ENCODE measurements at regions of chr12 and their contacts with region 1.

Region 1: GRCh38 chr12:11183011-11183410 is 3.7 kb downstream of the TAS2R42 start:
- ATAC-seq: peak in 5 of 8 experiments; percentile 57 to 97 (median 81)
- H3K4me3 ChIP-seq: no peak overlapping the region
- H3K27ac ChIP-seq: no peak overlapping the region
- H3K4me1 ChIP-seq: peaks cover 0 to 13% of the 10 kb centered on the region in 2 donors

Region 2: DNA sequence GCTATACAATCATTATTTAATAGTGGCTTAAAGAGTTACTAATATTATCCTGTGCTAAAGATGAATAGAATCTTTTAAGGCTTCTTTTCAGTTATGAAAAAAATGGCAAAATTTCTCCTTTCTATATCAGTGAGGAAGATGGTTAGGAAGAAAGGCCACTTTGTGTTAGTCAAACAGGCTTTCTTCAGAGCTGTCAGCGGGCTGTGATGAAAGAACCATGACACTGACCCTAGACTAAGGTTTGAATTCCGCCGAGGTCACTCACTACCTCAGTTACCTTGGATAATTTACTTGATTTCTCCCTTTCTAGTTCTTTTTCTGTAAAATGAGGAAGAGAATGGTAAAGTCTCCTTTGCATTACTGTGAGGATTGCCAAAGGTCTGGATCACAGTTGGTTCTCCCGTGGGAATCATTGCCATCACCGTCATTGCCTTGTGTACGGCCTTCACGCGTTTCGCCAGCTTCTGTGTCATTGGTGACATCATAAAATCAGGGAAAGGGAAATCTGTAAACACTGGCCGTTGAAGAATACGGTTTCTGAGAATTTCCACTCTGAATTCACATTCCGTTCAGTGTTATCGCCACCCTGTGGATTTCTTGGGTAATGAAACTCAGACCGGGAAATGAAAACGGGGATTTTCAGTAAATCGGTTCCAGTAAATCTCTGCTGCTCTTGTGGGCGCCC is 433.2 kb before region 1 on chr12:
- in situ Hi-C with region 1: loop called in 5 of 9 experiments (anchors 25 kb)
- ATAC-seq: peak; percentile 95 to 99 (median 98)
- H3K4me3 ChIP-seq: peak overlapping the region; percentile 6 to 21 (median 10)
- H3K27ac ChIP-seq: no peak overlapping the region
- H3K4me1 ChIP-seq: peaks cover 0 to 2% of the 10 kb centered on the region in 2 donors

Region 3: GRCh38 chr12:10779103-10779502 is 403.9 kb before region 1 on chr12:
- in situ Hi-C with region 1: loop called in 6 of 9 experiments (anchors 25 kb)
- ATAC-seq: no peak
- H3K4me3 ChIP-seq: no peak overlapping the region
- H3K27ac ChIP-seq: no peak overlapping the region
- H3K4me1 ChIP-seq: no peaks in the 10 kb centered on the region

Region 4: GRCh38 chr12:10968765-10969456 is 214.1 kb before region 1 on chr12:
- in situ Hi-C with region 1: loop called in 2 of 9 experiments (anchors 25 kb)
- ATAC-seq: peak in 1 of 8 experiments; percentile 26
- H3K4me3 ChIP-seq: no peak overlapping the region
- H3K27ac ChIP-seq: no peak overlapping the region
- H3K4me1 ChIP-seq: no peaks in the 10 kb centered on the region

Region 5: DNA sequence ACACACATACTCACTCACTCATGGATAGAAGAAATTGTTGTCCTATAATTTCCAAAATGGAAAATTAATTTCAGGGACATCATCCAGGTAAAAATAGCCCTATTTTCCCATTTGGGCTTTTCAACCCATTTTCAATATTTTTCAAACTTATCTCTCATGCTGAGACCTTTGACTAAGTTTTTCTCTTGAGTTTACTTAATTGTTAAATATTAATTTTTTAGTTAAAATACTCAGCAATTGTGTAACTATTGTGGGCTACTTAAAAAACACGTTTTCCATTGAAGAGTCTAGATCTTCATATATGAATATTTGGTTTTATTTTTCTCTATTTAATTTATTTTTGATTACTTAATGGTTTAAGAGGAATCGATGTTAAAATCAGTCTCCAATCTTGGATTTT is 76.7 kb before region 1 on chr12:
- in situ Hi-C with region 1: no loop called
- ATAC-seq: no peak
- H3K4me3 ChIP-seq: no peak overlapping the region
- H3K27ac ChIP-seq: no peak overlapping the region
- H3K4me1 ChIP-seq: no peaks in the 10 kb centered on the region